Caco-2 (cell line): ENCODE measurements at regions of chr10 and their contacts with region 1.

Region 1: GRCh38 chr10:88565072-88565471 is 18.0 kb downstream of the RNLS start:
- DNase-seq: no peak
- H3K4me3 ChIP-seq: no peak overlapping the region
- H3K4me3 Mint-ChIP-seq: no peak overlapping the region
- H3K27ac Mint-ChIP-seq: no peak overlapping the region
- H3K4me1 ChIP-seq: no peaks in the 10 kb centered on the region
- H3K4me1 Mint-ChIP-seq: no peaks in the 10 kb centered on the region
- H3K27me3 ChIP-seq: no peaks in the 10 kb centered on the region
- H3K27me3 Mint-ChIP-seq: no peaks in the 10 kb centered on the region
- CTCF ChIP-seq: peak; percentile 36 to 37

Region 2: DNA sequence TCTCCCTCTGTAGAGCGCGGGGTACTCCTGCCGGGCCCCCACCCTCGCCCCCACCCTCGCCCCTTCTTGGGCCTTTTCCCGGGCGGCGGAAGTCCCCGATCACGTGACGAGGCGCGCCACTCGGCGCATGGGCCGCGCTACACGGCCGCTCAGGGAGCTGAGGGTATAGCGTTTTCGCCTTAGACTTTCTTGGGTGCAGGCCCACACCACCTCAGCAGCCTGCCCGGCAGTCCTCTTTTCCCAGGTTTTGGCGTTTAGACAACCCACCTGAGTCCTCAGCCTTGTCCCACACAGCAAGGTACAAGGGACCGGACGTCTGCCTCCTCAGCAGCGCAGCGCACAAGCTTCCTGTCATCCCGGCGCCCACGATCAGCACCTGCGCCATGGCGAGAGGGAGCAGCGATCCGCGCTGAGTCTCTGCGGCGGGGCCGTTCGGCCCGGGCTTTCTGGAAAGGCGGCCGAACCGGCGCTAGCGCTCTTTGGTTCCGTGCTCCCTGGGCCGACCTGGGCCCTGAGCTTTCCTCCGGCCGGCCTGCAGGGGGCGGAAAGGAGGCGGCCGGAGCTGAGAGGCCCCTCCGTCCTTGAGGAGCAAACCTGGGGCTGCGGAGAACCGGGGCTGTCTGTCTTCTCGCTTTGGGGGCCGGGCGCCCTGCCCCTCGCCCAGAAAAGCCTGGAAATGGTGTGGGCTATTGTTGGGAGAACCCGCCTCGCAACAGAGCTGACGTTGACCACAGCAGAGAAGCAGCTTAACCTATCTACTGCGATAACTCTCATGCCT is 17.9 kb after region 1 on chr10 and contains the start of gene RNLS:
- CTCF ChIA-PET with region 1: interaction called, 16 read pairs
- POLR2A ChIA-PET with region 1: no interaction called
- intact Hi-C with region 1: no loop called
- DNase-seq: peak; percentile 72 to 76
- H3K4me3 ChIP-seq: peak within 1 kb of the TSS; percentile 74
- H3K4me3 Mint-ChIP-seq: peak within 1 kb of the TSS; percentile 88
- H3K27ac Mint-ChIP-seq: peak within 1 kb of the TSS; percentile 85
- H3K4me1 ChIP-seq: no peaks in the 10 kb centered on the region
- H3K4me1 Mint-ChIP-seq: peaks cover 7% of the 10 kb centered on the region
- H3K27me3 ChIP-seq: no peaks in the 10 kb centered on the region
- H3K27me3 Mint-ChIP-seq: peaks cover 9% of the 10 kb centered on the region
- CTCF ChIP-seq: peak; percentile 68 to 86
- total RNA-seq, gene RNLS: 5.7 and 6.7 TPM in 2 replicates

Region 3: GRCh38 chr10:88744002-88744401 is 178.9 kb after region 1 on chr10:
- CTCF ChIA-PET with region 1: interaction called, 7 read pairs
- POLR2A ChIA-PET with region 1: no interaction called
- intact Hi-C with region 1: loop called (anchors 1 kb)
- DNase-seq: peak in 1 of 2 experiments; percentile 28
- H3K4me3 ChIP-seq: no peak overlapping the region
- H3K4me3 Mint-ChIP-seq: no peak overlapping the region
- H3K27ac Mint-ChIP-seq: no peak overlapping the region
- H3K4me1 ChIP-seq: no peaks in the 10 kb centered on the region
- H3K4me1 Mint-ChIP-seq: no peaks in the 10 kb centered on the region
- H3K27me3 ChIP-seq: no peaks in the 10 kb centered on the region
- H3K27me3 Mint-ChIP-seq: peaks cover 11% of the 10 kb centered on the region
- CTCF ChIP-seq: peak in 1 of 2 experiments; percentile 38

Region 4: GRCh38 chr10:88791924-88792323 is 226.9 kb after region 1 on chr10:
- CTCF ChIA-PET with region 1: no interaction called
- POLR2A ChIA-PET with region 1: no interaction called
- intact Hi-C with region 1: loop called (anchors 1 kb)
- DNase-seq: peak; percentile 49 to 52
- H3K4me3 ChIP-seq: no peak overlapping the region
- H3K4me3 Mint-ChIP-seq: no peak overlapping the region
- H3K27ac Mint-ChIP-seq: no peak overlapping the region
- H3K4me1 ChIP-seq: no peaks in the 10 kb centered on the region
- H3K4me1 Mint-ChIP-seq: no peaks in the 10 kb centered on the region
- H3K27me3 ChIP-seq: no peaks in the 10 kb centered on the region
- H3K27me3 Mint-ChIP-seq: peaks cover 7% of the 10 kb centered on the region
- CTCF ChIP-seq: peak; percentile 66 to 73

Region 5: GRCh38 chr10:88810196-88810961 is 245.3 kb after region 1 on chr10:
- CTCF ChIA-PET with region 1: interaction called, 3 read pairs
- POLR2A ChIA-PET with region 1: no interaction called
- intact Hi-C with region 1: loop called (anchors 1 kb)
- DNase-seq: peak; percentile 37 to 56
- H3K4me3 ChIP-seq: no peak overlapping the region
- H3K4me3 Mint-ChIP-seq: no peak overlapping the region
- H3K27ac Mint-ChIP-seq: no peak overlapping the region
- H3K4me1 ChIP-seq: no peaks in the 10 kb centered on the region
- H3K4me1 Mint-ChIP-seq: no peaks in the 10 kb centered on the region
- H3K27me3 ChIP-seq: peaks cover 2% of the 10 kb centered on the region; the same call in 1 of the 2 replicates
- H3K27me3 Mint-ChIP-seq: peaks cover 5% of the 10 kb centered on the region
- CTCF ChIP-seq: peak; percentile 65 to 76

Region 6: GRCh38 chr10:88835910-88836221 is 270.8 kb after region 1 on chr10:
- CTCF ChIA-PET with region 1: no interaction called
- POLR2A ChIA-PET with region 1: no interaction called
- intact Hi-C with region 1: no loop called
- DNase-seq: no peak
- H3K4me3 ChIP-seq: no peak overlapping the region
- H3K4me3 Mint-ChIP-seq: no peak overlapping the region
- H3K27ac Mint-ChIP-seq: no peak overlapping the region
- H3K4me1 ChIP-seq: peaks cover 24% of the 10 kb centered on the region
- H3K4me1 Mint-ChIP-seq: peaks cover 7% of the 10 kb centered on the region
- H3K27me3 ChIP-seq: no peaks in the 10 kb centered on the region
- H3K27me3 Mint-ChIP-seq: no peaks in the 10 kb centered on the region
- CTCF ChIP-seq: no peak

Region 7: DNA sequence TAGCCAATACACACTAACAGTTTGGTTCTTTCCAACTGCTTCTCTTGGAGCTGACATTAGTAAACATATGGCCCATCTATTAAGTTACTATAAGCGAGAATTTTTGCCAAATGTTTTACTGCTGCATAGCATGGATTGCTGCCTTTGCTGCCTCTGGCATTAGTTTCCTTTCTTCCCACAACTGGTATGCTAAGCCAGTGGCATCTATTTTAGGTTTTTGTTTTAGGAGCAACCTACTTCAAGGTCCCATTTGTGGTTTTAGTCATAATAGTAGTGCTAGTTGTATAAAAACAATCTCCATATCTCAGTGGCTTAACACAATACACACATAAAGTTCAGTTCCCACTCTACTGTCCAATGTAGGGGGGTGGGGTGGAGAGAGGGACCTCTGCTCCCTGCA is 1105.9 kb after region 1 on chr10:
- CTCF ChIA-PET with region 1: no interaction called
- POLR2A ChIA-PET with region 1: no interaction called
- intact Hi-C with region 1: no loop called
- DNase-seq: no peak
- H3K4me3 ChIP-seq: no peak overlapping the region
- H3K4me3 Mint-ChIP-seq: no peak overlapping the region
- H3K27ac Mint-ChIP-seq: no peak overlapping the region
- H3K4me1 ChIP-seq: peaks cover 5% of the 10 kb centered on the region; the same call in 1 of the 2 replicates
- H3K4me1 Mint-ChIP-seq: no peaks in the 10 kb centered on the region
- H3K27me3 ChIP-seq: no peaks in the 10 kb centered on the region
- H3K27me3 Mint-ChIP-seq: no peaks in the 10 kb centered on the region
- CTCF ChIP-seq: no peak